Prostate gland (tissue), 2 donors: ENCODE measurements at regions of chr1 and their contacts with region 1.

Region 1: DNA sequence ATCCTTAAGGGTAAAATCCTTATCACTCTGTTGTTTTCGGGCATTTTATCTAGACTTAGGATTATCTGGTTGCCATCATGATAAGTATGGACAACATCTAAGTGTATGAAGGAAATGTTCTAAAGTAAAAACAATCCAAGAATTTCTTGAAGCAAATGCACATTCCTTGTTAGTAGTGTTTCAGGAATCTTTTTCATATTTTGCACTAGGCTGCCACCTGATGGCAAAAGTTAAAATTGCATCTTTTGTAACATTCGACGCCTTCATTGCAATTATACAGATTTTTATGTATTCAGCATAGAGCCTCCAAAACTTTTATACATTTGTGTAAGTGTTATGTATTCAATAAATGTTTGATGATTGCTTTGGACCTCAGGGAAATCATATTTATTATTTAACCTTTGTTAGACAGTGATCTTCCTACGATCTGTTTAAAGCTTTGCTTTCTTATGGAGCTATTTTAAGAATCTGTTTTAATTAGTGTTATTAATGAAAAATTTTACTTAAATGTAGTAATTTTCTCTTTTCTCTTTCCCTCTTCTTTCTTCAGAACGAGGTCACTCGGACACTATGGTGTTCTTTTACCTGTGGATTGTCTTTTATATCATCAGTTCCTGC is 49.4 kb upstream of the KIAA1614 start:
- DNase-seq: peak; percentile 27
- H3K4me3 ChIP-seq: no peak overlapping the region
- H3K27ac ChIP-seq: no peak overlapping the region
- H3K4me1 ChIP-seq: no peaks in the 10 kb centered on the region
- H3K27me3 ChIP-seq: no peaks in the 10 kb centered on the region
- CTCF ChIP-seq: peak; percentile 46 to 90 (median 82)
- POLR2A ChIP-seq: no peak

Region 2: GRCh38 chr1:180515864-180516388 is 347.3 kb before region 1 on chr1:
- intact Hi-C with region 1: loop called (anchors 5 kb)
- DNase-seq: peak; percentile 73
- H3K4me3 ChIP-seq: no peak overlapping the region
- H3K27ac ChIP-seq: no peak overlapping the region
- H3K4me1 ChIP-seq: no peaks in the 10 kb centered on the region
- H3K27me3 ChIP-seq: no peaks in the 10 kb centered on the region
- CTCF ChIP-seq: peak; percentile 43 to 83 (median 80)
- POLR2A ChIP-seq: no peak

Region 3: DNA sequence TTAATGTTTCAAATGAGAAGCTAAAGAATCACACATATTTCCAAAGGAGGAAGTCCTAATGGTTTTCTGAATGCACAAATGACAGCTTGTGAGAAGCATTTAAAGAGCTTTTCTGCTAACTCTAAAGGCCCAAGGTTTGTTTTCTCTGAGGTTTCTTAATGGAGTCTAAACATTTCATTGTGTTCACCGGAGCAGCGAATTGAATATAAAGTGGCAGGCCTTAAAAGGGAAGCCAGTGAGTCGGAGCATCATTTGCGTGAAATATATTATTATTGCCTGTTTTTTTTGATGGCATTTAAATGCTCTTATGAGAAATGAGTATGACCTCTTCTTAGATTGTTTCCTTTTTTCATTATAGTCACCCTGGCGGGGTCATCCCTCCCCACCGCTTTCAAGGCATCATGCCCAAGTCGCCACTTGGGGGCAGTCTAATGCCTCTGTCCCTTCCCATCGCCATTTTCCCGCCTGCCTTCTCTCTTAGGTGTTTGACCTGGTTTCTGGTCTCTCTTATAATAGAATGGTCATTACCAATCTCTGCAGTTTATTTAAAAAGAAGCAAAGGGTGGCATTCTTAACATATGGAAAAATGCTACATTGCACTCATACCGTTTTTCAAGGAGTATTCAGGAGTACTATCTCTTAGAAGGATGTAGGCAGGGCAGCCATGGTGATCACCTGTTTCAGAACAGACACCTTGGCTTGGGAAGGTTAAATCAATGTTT is 329.8 kb before region 1 on chr1:
- intact Hi-C with region 1: loop called (anchors 5 kb)
- DNase-seq: peak; percentile 36
- H3K4me3 ChIP-seq: no peak overlapping the region
- H3K27ac ChIP-seq: no peak overlapping the region
- H3K4me1 ChIP-seq: peaks cover 3% of the 10 kb centered on the region
- H3K27me3 ChIP-seq: no peaks in the 10 kb centered on the region
- CTCF ChIP-seq: peak in 3 of 4 experiments; percentile 58 to 67 (median 61)
- POLR2A ChIP-seq: no peak